CD4-positive, alpha-beta memory T cell (primary cell): ENCODE measurements at regions of chr4 and their contacts with region 1.

Region 1: DNA sequence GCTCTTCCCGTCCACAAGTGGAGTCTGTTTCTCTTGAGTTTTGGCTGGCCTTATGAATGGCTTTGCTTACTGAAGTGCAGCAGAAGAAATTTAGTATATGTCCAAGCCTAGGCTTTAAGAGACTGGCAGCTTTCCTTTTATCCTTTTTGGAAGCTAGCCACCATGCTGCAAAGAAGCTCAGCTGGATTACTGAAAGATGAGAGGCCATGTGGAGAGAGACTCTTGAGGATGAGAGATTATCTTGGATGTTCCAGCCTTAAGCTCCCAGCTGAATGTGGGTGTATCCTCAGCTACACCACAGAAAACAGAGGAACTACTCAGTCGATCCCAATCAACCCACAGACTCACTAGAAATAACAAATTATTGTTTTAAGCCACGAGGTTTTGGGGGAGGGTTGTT is 12.5 kb downstream of the CCNG2 start:
- DNase-seq: no peak
- H3K4me3 ChIP-seq: no peak overlapping the region
- H3K4me3 Mint-ChIP-seq: no peak overlapping the region
- H3K27ac ChIP-seq: no peak overlapping the region
- H3K27ac Mint-ChIP-seq: peak overlapping the region in 1 of 7 donors; percentile 14
- H3K4me1 ChIP-seq: no peaks in the 10 kb centered on the region
- H3K4me1 Mint-ChIP-seq: peaks cover 0 to 6% (median 2%) of the 10 kb centered on the region in 4 donors
- H3K27me3 ChIP-seq: no peaks in the 10 kb centered on the region
- H3K27me3 Mint-ChIP-seq: peaks cover 0 to 4% of the 10 kb centered on the region in 2 donors

Region 2: DNA sequence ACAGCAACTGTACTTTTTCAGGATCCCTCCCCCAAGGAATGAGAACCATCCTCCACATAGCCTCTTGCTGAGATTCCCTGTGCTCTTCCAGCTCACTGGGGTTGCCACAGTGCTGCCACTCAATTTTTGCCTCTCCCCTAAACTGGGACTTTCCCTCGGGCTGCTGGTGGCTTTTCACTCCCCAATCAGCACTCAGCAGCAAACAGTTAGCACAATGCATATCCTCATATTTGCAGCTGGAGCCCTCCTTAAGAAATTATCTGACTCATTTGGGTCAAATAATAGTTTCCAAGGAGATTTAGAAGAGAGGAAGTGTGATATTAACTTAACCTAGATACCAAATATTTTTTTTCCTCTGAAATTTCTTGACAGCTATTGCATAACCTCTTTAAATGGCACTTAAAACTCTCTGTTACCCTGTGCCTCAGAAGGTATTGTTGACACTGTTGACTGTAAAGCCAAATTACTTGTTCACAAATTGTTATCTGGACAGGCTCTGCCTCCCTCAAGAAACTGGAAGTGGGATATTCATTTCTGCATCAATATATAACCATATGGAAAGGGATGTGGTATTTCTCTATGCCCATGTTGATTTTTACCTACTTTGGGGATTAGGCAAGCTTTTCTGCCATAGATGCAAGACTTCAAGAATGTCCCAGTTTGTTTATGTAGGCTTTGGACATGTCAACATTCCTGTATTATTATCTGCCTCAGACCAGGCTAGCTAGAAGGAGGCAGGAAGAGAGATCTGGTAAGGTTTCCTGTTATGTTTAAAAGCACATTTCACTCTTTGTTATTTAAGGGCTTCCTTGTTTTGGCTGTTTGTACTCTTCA is 161.9 kb before region 1 on chr4:
- CTCF ChIA-PET with region 1: no interaction called
- POLR2A ChIA-PET with region 1: no interaction called
- intact Hi-C with region 1: no loop called
- DNase-seq: peak; percentile 22 to 68 (median 36)
- H3K4me3 ChIP-seq: no peak overlapping the region
- H3K4me3 Mint-ChIP-seq: peak overlapping the region in 7 of 8 donors; percentile 43 to 78 (median 66)
- H3K27ac ChIP-seq: peak overlapping the region; percentile 22
- H3K27ac Mint-ChIP-seq: peak overlapping the region; percentile 75 to 95 (median 89)
- H3K4me1 ChIP-seq: peaks cover 35% of the 10 kb centered on the region
- H3K4me1 Mint-ChIP-seq: peaks cover 44 to 67% (median 52%) of the 10 kb centered on the region in 4 donors
- H3K27me3 ChIP-seq: no peaks in the 10 kb centered on the region
- H3K27me3 Mint-ChIP-seq: no peaks in the 10 kb centered on the region

Region 3: GRCh38 chr4:77800483-77801259 is 631.2 kb after region 1 on chr4:
- CTCF ChIA-PET with region 1: no interaction called
- POLR2A ChIA-PET with region 1: no interaction called
- intact Hi-C with region 1: loop called (anchors 10 kb)
- DNase-seq: no peak
- H3K4me3 ChIP-seq: peak overlapping the region in 1 of 2 donors; percentile 21
- H3K4me3 Mint-ChIP-seq: peak overlapping the region; percentile 59 to 84 (median 80)
- H3K27ac ChIP-seq: peak overlapping the region; percentile 49
- H3K27ac Mint-ChIP-seq: peak overlapping the region; percentile 18 to 90 (median 62)
- H3K4me1 ChIP-seq: peaks cover 95% of the 10 kb centered on the region
- H3K4me1 Mint-ChIP-seq: peaks cover 47 to 92% (median 67%) of the 10 kb centered on the region in 4 donors
- H3K27me3 ChIP-seq: no peaks in the 10 kb centered on the region
- H3K27me3 Mint-ChIP-seq: no peaks in the 10 kb centered on the region